GM12878 (cell line): ENCODE measurements at regions of chr3 and their contacts with region 1.

Region 1: GRCh38 chr3:45938864-45939263 is 4.4 kb upstream of the CXCR6 start:
- DNase-seq: peak; percentile 66
- ATAC-seq: peak; percentile 97
- H3K4me3 ChIP-seq: no peak overlapping the region
- H3K27ac ChIP-seq: no peak overlapping the region
- H3K4me1 ChIP-seq: peaks cover 7% of the 10 kb centered on the region
- H3K27me3 ChIP-seq: no peaks in the 10 kb centered on the region
- CTCF ChIP-seq: peak; percentile 88 to 94 (median 91); a peak in 5 of 6 replicates
- EP300 ChIP-seq: no peak
- POLR2A ChIP-seq: no peak
- RAD21 ChIP-seq: peak; percentile 94

Region 2: GRCh38 chr3:45612918-45613602 is 325.8 kb before region 1 on chr3:
- CTCF ChIA-PET with region 1: no interaction called
- POLR2A ChIA-PET with region 1: no interaction called
- RAD21 ChIA-PET with region 1: no interaction called
- SMC1A ChIA-PET with region 1: no interaction called
- in situ Hi-C with region 1: no loop called
- intact Hi-C with region 1: no loop called
- DNase-seq: peak; percentile 91
- ATAC-seq: peak; percentile 85
- H3K4me3 ChIP-seq: peak overlapping the region; percentile 15; the same call in 1 of the 2 replicates
- H3K27ac ChIP-seq: peak overlapping the region; percentile 63
- H3K4me1 ChIP-seq: peaks cover 45% of the 10 kb centered on the region
- H3K27me3 ChIP-seq: no peaks in the 10 kb centered on the region
- CTCF ChIP-seq: no peak
- EP300 ChIP-seq: peak; percentile 39 to 62; a peak in 1 of 4 replicates
- POLR2A ChIP-seq: no peak
- RAD21 ChIP-seq: peak; percentile 33

Region 3: GRCh38 chr3:45653205-45653604 is 285.7 kb before region 1 on chr3:
- CTCF ChIA-PET with region 1: no interaction called
- POLR2A ChIA-PET with region 1: no interaction called
- RAD21 ChIA-PET with region 1: no interaction called
- SMC1A ChIA-PET with region 1: no interaction called
- in situ Hi-C with region 1: no loop called
- intact Hi-C with region 1: no loop called
- DNase-seq: no peak
- ATAC-seq: no peak
- H3K4me3 ChIP-seq: no peak overlapping the region
- H3K27ac ChIP-seq: no peak overlapping the region
- H3K4me1 ChIP-seq: peaks cover 20% of the 10 kb centered on the region
- H3K27me3 ChIP-seq: no peaks in the 10 kb centered on the region
- CTCF ChIP-seq: no peak
- EP300 ChIP-seq: no peak
- POLR2A ChIP-seq: no peak
- RAD21 ChIP-seq: no peak

Region 4: GRCh38 chr3:45923755-45924154 is 15.1 kb before region 1 on chr3:
- CTCF ChIA-PET with region 1: interaction called, 7 read pairs
- POLR2A ChIA-PET with region 1: no interaction called
- RAD21 ChIA-PET with region 1: interaction called, 6 read pairs
- SMC1A ChIA-PET with region 1: interaction called, 11 read pairs
- in situ Hi-C with region 1: no loop called
- intact Hi-C with region 1: no loop called
- DNase-seq: no peak
- ATAC-seq: no peak
- H3K4me3 ChIP-seq: no peak overlapping the region
- H3K27ac ChIP-seq: no peak overlapping the region
- H3K4me1 ChIP-seq: no peaks in the 10 kb centered on the region; the same call in 1 of the 2 replicates
- H3K27me3 ChIP-seq: no peaks in the 10 kb centered on the region
- CTCF ChIP-seq: no peak
- EP300 ChIP-seq: no peak
- POLR2A ChIP-seq: no peak
- RAD21 ChIP-seq: no peak

Region 5: GRCh38 chr3:45995236-45996192 is 56.6 kb after region 1 on chr3 and contains the start of gene FYCO1:
- CTCF ChIA-PET with region 1: interaction called, 40 read pairs
- POLR2A ChIA-PET with region 1: interaction called, 3 read pairs
- RAD21 ChIA-PET with region 1: interaction called, 17 read pairs
- SMC1A ChIA-PET with region 1: interaction called, 30 read pairs
- in situ Hi-C with region 1: no loop called
- intact Hi-C with region 1: no loop called
- DNase-seq: peak; percentile 59
- ATAC-seq: peak; percentile 94
- H3K4me3 ChIP-seq: peak within 1 kb of the TSS; percentile 79
- H3K27ac ChIP-seq: peak within 1 kb of the TSS; percentile 90
- H3K4me1 ChIP-seq: peaks cover 30% of the 10 kb centered on the region
- H3K27me3 ChIP-seq: no peaks in the 10 kb centered on the region
- CTCF ChIP-seq: no peak
- EP300 ChIP-seq: peak in 1 of 2 experiments; percentile 34; a peak in 1 of 4 replicates
- POLR2A ChIP-seq: peak; percentile 88
- RAD21 ChIP-seq: no peak
- polyA plus RNA-seq, gene FYCO1: 1.5 to 2.2 TPM

Region 6: DNA sequence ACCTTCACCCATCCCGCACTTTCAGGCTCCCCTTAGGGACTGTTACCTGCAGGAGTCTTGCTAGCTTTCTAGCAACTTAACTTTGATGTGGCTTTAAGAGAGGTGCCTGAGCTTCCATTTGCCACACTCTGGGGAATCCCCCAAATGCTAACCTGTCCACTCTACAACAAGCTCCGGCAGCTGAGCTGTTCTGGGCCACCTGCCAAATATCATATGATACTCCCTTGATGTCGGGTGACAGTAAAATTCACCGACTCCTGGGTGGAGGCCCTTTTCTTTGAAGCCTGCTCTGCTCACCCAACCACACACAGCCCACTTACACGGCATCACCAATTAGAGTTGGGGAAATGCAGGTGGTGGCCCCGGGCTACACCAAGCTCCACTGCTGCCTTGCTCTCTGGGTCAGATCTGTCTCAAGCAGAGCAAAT is 126.4 kb after region 1 on chr3:
- CTCF ChIA-PET with region 1: interaction called, 20 read pairs
- POLR2A ChIA-PET with region 1: no interaction called
- RAD21 ChIA-PET with region 1: interaction called, 15 read pairs
- SMC1A ChIA-PET with region 1: interaction called, 35 read pairs
- in situ Hi-C with region 1: no loop called
- intact Hi-C with region 1: no loop called
- DNase-seq: peak; percentile 56
- ATAC-seq: peak; percentile 96
- H3K4me3 ChIP-seq: no peak overlapping the region
- H3K27ac ChIP-seq: no peak overlapping the region
- H3K4me1 ChIP-seq: peaks cover 19% of the 10 kb centered on the region
- H3K27me3 ChIP-seq: no peaks in the 10 kb centered on the region
- CTCF ChIP-seq: no peak
- EP300 ChIP-seq: peak in 1 of 2 experiments; percentile 59; a peak in 2 of 4 replicates
- POLR2A ChIP-seq: no peak
- RAD21 ChIP-seq: peak; percentile 0; the same call in 1 of the 2 replicates

Region 7: GRCh38 chr3:46378426-46378942 is 439.6 kb after region 1 on chr3:
- CTCF ChIA-PET with region 1: interaction called, 16 read pairs
- POLR2A ChIA-PET with region 1: no interaction called
- RAD21 ChIA-PET with region 1: interaction called, 20 read pairs
- SMC1A ChIA-PET with region 1: interaction called, 19 read pairs
- in situ Hi-C with region 1: no loop called
- intact Hi-C with region 1: loop called (anchors 1 kb)
- DNase-seq: no peak
- ATAC-seq: peak; percentile 90
- H3K4me3 ChIP-seq: no peak overlapping the region
- H3K27ac ChIP-seq: no peak overlapping the region
- H3K4me1 ChIP-seq: peaks cover 12% of the 10 kb centered on the region
- H3K27me3 ChIP-seq: peaks cover 0 to 3% of the 10 kb centered on the region in 2 experiments; a peak in 2 of 4 replicates
- CTCF ChIP-seq: peak; percentile 77 to 80 (median 79)
- EP300 ChIP-seq: no peak
- POLR2A ChIP-seq: no peak
- RAD21 ChIP-seq: peak; percentile 92